ENCODE measurements at regions of chr9 and their contacts with region 1.

Region 1: DNA sequence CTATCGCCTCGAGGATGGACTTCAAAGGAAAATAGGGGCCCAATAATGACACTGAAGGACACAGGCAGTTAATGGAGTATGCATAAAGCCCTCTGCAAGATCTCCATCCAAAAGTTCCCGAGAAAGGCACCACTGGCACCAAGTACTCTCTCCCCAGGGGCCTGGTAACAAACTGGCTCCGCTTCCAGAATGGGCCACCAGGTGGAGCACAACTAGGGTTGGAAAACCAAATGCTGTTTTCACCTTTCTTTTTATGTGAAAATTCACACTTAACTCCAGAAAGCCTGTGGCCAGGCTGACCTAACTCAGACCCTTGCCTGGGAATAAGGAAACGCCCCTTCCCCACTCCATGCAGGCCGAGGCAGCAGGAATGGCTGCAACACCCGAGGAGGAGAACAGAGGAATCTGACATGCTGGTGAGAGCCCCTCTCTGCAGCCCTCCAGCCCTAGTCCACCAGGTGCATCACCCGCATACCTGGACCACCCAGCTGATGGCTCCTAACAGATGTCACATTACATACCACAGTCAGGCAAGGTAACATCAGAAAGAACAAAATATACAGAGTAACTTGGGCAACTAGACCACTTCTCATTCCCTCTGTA is 42.8 kb downstream of the CAMSAP1 start:
- DNase-seq: peak; percentile 66
- ATAC-seq: peak; percentile 56
- H3K4me3 ChIP-seq: no peak overlapping the region
- H3K4me3 Mint-ChIP-seq: no peak overlapping the region
- H3K27ac ChIP-seq: no peak overlapping the region
- H3K27ac Mint-ChIP-seq: no peak overlapping the region
- H3K4me1 ChIP-seq: peaks cover 0 to 6% of the 10 kb centered on the region in 2 donors
- H3K4me1 Mint-ChIP-seq: peaks cover 5% of the 10 kb centered on the region
- H3K27me3 ChIP-seq: no peaks in the 10 kb centered on the region
- H3K27me3 Mint-ChIP-seq: no peaks in the 10 kb centered on the region
- CTCF ChIP-seq: peak; percentile 96

Region 2: DNA sequence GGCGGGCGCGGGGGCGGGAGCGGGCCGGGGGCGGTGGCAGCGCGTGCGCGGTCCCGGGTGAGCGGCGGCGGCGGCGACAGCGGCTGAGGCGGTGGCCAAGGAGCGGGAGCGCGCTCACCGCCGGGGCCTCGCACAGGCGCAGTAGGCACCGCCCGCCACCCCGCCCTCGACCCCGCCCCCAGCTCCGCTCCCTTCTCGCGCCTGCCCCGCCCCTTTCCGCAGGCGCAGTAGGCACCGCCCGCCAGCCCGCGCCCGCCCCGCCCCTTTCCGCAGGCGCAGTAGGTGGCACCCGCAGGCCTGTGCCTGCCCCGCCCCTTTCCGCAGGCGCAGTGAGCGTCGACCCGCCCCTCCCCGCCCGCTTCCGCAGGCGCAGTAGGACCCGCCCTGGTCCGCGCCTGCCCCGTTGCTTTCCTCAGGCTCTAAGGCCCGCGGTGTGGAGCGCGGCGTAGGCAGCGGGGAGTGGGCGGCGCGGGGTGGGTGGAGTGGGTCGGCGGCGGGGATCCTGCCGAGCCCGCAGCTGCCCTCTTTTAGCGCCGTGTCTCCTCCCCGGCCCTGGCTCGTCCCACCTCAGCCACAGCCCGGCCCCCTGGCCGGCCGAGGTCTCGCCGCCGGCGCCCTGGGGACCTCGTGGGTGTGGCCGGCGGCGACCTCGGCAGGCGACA is 43.0 kb after region 1 on chr9 and contains the start of gene CAMSAP1:
- CTCF ChIA-PET with region 1: interaction called, 7 read pairs
- POLR2A ChIA-PET with region 1: no interaction called
- intact Hi-C with region 1: loop called (anchors 1 kb)
- DNase-seq: peak; percentile 97
- ATAC-seq: peak; percentile 88
- H3K4me3 ChIP-seq: peak within 1 kb of the TSS; percentile 38 to 85 (median 84)
- H3K4me3 Mint-ChIP-seq: peak within 1 kb of the TSS; percentile 93
- H3K27ac ChIP-seq: peak within 1 kb of the TSS; percentile 44 to 74
- H3K27ac Mint-ChIP-seq: peak within 1 kb of the TSS; percentile 80
- H3K4me1 ChIP-seq: peaks cover 20 to 23% of the 10 kb centered on the region in 2 donors
- H3K4me1 Mint-ChIP-seq: peaks cover 43% of the 10 kb centered on the region
- H3K27me3 ChIP-seq: no peaks in the 10 kb centered on the region
- H3K27me3 Mint-ChIP-seq: no peaks in the 10 kb centered on the region
- CTCF ChIP-seq: no peak
- total RNA-seq, gene CAMSAP1: 31.0 and 31.6 TPM in 2 replicates

Region 3: DNA sequence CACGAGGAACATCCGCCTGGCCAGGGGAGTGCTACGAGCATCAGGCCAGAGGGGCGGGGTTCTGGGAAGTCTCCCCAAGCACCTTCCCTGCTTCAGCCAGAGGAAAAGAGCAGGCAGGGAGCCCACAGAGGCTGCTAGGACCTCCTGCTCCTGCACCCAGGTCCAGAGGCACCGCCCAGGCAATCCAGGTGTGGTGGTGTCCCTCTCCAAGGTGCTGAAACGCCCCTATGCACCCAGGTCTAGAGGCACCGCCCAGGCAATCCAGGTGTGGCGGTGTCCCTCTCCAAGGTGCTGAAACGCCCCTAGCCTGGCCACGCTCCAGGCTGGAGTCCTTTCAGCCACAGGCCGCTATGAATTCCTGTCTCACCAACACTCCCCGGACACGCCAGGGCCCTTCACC is 107.3 kb after region 1 on chr9:
- CTCF ChIA-PET with region 1: interaction called, 11 read pairs
- POLR2A ChIA-PET with region 1: no interaction called
- intact Hi-C with region 1: no loop called
- DNase-seq: peak; percentile 57
- ATAC-seq: no peak
- H3K4me3 ChIP-seq: no peak overlapping the region
- H3K4me3 Mint-ChIP-seq: no peak overlapping the region
- H3K27ac ChIP-seq: no peak overlapping the region
- H3K27ac Mint-ChIP-seq: no peak overlapping the region
- H3K4me1 ChIP-seq: peaks cover 0 to 8% of the 10 kb centered on the region in 2 donors
- H3K4me1 Mint-ChIP-seq: peaks cover 7% of the 10 kb centered on the region
- H3K27me3 ChIP-seq: peaks cover 0 to 17% (median 1%) of the 10 kb centered on the region in 4 experiments
- H3K27me3 Mint-ChIP-seq: peaks cover 29% of the 10 kb centered on the region
- CTCF ChIP-seq: no peak

Measured in B cell (primary cell).